CD8-positive, alpha-beta T cell (primary cell): ENCODE measurements at regions of chr6 and their contacts with region 1.

Region 1: GRCh38 chr6:99530627-99531026 is 15.4 kb upstream of the USP45 start:
- DNase-seq: no peak
- ATAC-seq: no peak
- H3K4me3 ChIP-seq: no peak overlapping the region
- H3K4me3 Mint-ChIP-seq: no peak overlapping the region
- H3K27ac ChIP-seq: no peak overlapping the region
- H3K27ac Mint-ChIP-seq: no peak overlapping the region
- H3K4me1 ChIP-seq: no peaks in the 10 kb centered on the region
- H3K4me1 Mint-ChIP-seq: peaks cover 8% of the 10 kb centered on the region
- H3K27me3 ChIP-seq: no peaks in the 10 kb centered on the region
- H3K27me3 Mint-ChIP-seq: no peaks in the 10 kb centered on the region
- CTCF ChIP-seq: no peak

Region 2: DNA sequence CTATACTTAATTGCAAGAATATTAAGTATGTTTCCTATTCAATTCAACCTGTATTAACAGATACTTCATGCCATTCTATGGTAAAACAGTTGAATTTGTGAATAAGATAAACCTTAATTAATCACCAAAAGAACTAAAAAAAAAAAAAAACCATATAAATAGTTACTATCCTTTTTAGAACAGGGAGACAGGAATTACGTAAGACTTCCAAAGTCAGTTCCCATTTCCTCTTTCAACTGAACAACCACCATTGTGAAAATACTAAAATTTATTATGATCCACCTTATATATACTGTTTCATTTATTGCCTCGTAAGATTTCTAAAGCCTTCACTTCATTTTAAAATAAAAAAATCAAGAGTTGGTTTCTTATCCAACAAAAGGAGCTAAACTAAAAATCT is 28.4 kb after region 1 on chr6:
- CTCF ChIA-PET with region 1: no interaction called
- POLR2A ChIA-PET with region 1: no interaction called
- intact Hi-C with region 1: loop called in 1 of 2 experiments (anchors 2 kb)
- DNase-seq: no peak
- ATAC-seq: no peak
- H3K4me3 ChIP-seq: no peak overlapping the region
- H3K4me3 Mint-ChIP-seq: no peak overlapping the region
- H3K27ac ChIP-seq: no peak overlapping the region
- H3K27ac Mint-ChIP-seq: no peak overlapping the region
- H3K4me1 ChIP-seq: no peaks in the 10 kb centered on the region
- H3K4me1 Mint-ChIP-seq: peaks cover 16% of the 10 kb centered on the region
- H3K27me3 ChIP-seq: no peaks in the 10 kb centered on the region
- H3K27me3 Mint-ChIP-seq: no peaks in the 10 kb centered on the region
- CTCF ChIP-seq: no peak

Region 3: GRCh38 chr6:99993533-99994251 is 463.1 kb after region 1 on chr6 and contains the start of gene MCHR2:
- CTCF ChIA-PET with region 1: no interaction called
- POLR2A ChIA-PET with region 1: no interaction called
- intact Hi-C with region 1: no loop called
- DNase-seq: no peak
- ATAC-seq: no peak
- H3K4me3 ChIP-seq: no peak within 1 kb of the TSS
- H3K4me3 Mint-ChIP-seq: no peak within 1 kb of the TSS
- H3K27ac ChIP-seq: no peak within 1 kb of the TSS
- H3K27ac Mint-ChIP-seq: no peak within 1 kb of the TSS
- H3K4me1 ChIP-seq: no peaks in the 10 kb centered on the region
- H3K4me1 Mint-ChIP-seq: peaks cover 3% of the 10 kb centered on the region
- H3K27me3 ChIP-seq: peaks cover 2 to 3% of the 10 kb centered on the region in 2 experiments
- H3K27me3 Mint-ChIP-seq: peaks cover 30% of the 10 kb centered on the region
- CTCF ChIP-seq: no peak
- total RNA-seq, gene MCHR2: not detected